HCT116 (cell line): ENCODE measurements at regions of chr18 and their contacts with region 1.

Region 1: DNA sequence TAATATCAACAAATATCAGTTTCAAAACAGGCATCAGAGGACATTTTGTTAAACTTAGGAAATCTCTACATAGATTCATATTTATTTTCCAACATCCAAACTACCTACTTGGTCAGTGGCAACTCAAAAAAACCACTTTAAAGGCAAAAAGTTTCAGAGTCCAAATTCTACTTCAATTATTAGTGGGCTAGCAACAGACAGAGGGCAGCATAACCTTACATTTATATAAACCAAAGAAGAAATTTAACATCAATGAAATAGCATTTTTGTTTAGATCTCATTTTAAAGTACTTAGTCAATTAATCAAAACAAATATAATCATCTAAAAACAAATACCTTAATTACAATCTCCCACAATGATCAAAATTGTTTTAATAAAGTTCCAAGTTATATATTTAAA is 33.3 kb downstream of the RTTN start:
- DNase-seq: no peak
- ATAC-seq: no peak
- H3K4me3 ChIP-seq: no peak overlapping the region
- H3K27ac ChIP-seq: no peak overlapping the region
- H3K4me1 ChIP-seq: no peaks in the 10 kb centered on the region; a peak in 2 of 4 replicates
- H3K27me3 ChIP-seq: no peaks in the 10 kb centered on the region
- CTCF ChIP-seq: peak; percentile 29 to 63 (median 53); a peak in 3 of 6 replicates
- POLR2A ChIP-seq: no peak
- RAD21 ChIP-seq: peak; percentile 68

Region 2: DNA sequence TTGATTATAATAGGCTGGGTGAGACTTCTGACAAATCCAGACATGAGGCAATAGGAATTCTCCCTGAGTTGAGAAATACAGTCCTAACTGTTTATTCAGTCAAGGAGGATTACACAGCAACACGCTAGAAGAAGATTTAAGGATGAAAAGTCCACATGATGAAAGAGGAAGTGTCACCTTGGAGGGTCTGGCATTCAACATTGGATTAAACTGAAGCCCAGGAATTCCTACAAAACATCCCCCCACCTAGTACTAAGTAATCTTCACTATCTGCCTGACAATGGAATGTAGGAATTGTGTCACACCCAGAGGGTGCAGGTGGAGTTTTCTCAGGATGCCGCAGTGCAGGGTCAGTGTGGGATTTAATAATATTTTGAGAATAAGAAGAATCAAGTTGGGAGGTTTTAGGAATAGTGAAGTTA is 259.0 kb after region 1 on chr18:
- CTCF ChIA-PET with region 1: interaction called, 10 read pairs
- POLR2A ChIA-PET with region 1: no interaction called
- RAD21 ChIA-PET with region 1: no interaction called
- intact Hi-C with region 1: no loop called
- DNase-seq: no peak
- ATAC-seq: no peak
- H3K4me3 ChIP-seq: no peak overlapping the region
- H3K27ac ChIP-seq: peak overlapping the region; percentile 38
- H3K4me1 ChIP-seq: peaks cover 24 to 42% of the 10 kb centered on the region in 2 experiments
- H3K27me3 ChIP-seq: no peaks in the 10 kb centered on the region
- CTCF ChIP-seq: no peak
- POLR2A ChIP-seq: no peak
- RAD21 ChIP-seq: no peak

Region 3: GRCh38 chr18:70454704-70455322 is 282.6 kb after region 1 on chr18:
- CTCF ChIA-PET with region 1: interaction called, 10 read pairs
- POLR2A ChIA-PET with region 1: no interaction called
- RAD21 ChIA-PET with region 1: no interaction called
- intact Hi-C with region 1: loop called (anchors 1 kb)
- DNase-seq: peak; percentile 67
- ATAC-seq: peak; percentile 83
- H3K4me3 ChIP-seq: no peak overlapping the region
- H3K27ac ChIP-seq: no peak overlapping the region
- H3K4me1 ChIP-seq: 0 out of 4 replicates have a peak, but pooled peaks cover 0 to 5% of the 10 kb centered on the region in 2 experiments
- H3K27me3 ChIP-seq: no peaks in the 10 kb centered on the region
- CTCF ChIP-seq: peak; percentile 54 to 85 (median 73); a peak in 5 of 6 replicates
- POLR2A ChIP-seq: no peak
- RAD21 ChIP-seq: peak; percentile 84